H1 (cell line): ENCODE measurements at regions of chr12 and their contacts with region 1.

Region 1: GRCh38 chr12:49098035-49098451 is 3.4 kb upstream of the DHH start:
- DNase-seq: peak in 1 of 2 experiments; percentile 88
- H3K4me3 ChIP-seq: no peak overlapping the region
- H3K27ac ChIP-seq: no peak overlapping the region
- H3K4me1 ChIP-seq: peaks cover 0 to 11% (median 8%) of the 10 kb centered on the region in 4 experiments; a peak in 4 of 7 replicates
- H3K27me3 ChIP-seq: peaks cover 13 to 24% (median 23%) of the 10 kb centered on the region in 4 experiments
- CTCF ChIP-seq: peak; percentile 87 to 96 (median 91)
- EP300 ChIP-seq: no peak
- POLR2A ChIP-seq: no peak
- RAD21 ChIP-seq: peak; percentile 70 to 79

Region 2: GRCh38 chr12:49069507-49070346 is 28.3 kb before region 1 on chr12 and contains the start of gene RHEBL1:
- CTCF ChIA-PET with region 1: interaction called, 105 read pairs
- POLR2A ChIA-PET with region 1: interaction called, 7 read pairs
- DNase-seq: peak; percentile 86 to 98
- H3K4me3 ChIP-seq: peak within 1 kb of the TSS; percentile 70 to 93 (median 80)
- H3K27ac ChIP-seq: no peak within 1 kb of the TSS
- H3K4me1 ChIP-seq: peaks cover 2 to 6% (median 4%) of the 10 kb centered on the region in 4 experiments; a peak in 5 of 7 replicates
- H3K27me3 ChIP-seq: peaks cover 0 to 8% (median 3%) of the 10 kb centered on the region in 4 experiments; a peak in 5 of 7 replicates
- CTCF ChIP-seq: no peak
- EP300 ChIP-seq: no peak
- POLR2A ChIP-seq: no peak
- RAD21 ChIP-seq: no peak
- total RNA-seq, gene RHEBL1: 7.0 and 7.5 TPM in 2 replicates

Region 3: GRCh38 chr12:49110464-49111155 is 12.6 kb after region 1 on chr12 and contains the start of gene LMBR1L:
- CTCF ChIA-PET with region 1: interaction called, 178 read pairs
- POLR2A ChIA-PET with region 1: interaction called, 16 read pairs
- DNase-seq: peak; percentile 90 to 93
- H3K4me3 ChIP-seq: peak within 1 kb of the TSS; percentile 74 to 99 (median 92)
- H3K27ac ChIP-seq: peak within 1 kb of the TSS; percentile 55; the same call in 1 of the 2 replicates
- H3K4me1 ChIP-seq: peaks cover 0 to 10% (median 2%) of the 10 kb centered on the region in 4 experiments; a peak in 3 of 7 replicates
- H3K27me3 ChIP-seq: no peaks in the 10 kb centered on the region
- CTCF ChIP-seq: peak; percentile 9 to 43 (median 40); a peak in 2 of 4 replicates
- EP300 ChIP-seq: no peak
- POLR2A ChIP-seq: peak in 1 of 2 experiments; percentile 60; a peak in 1 of 3 replicates
- RAD21 ChIP-seq: peak in 1 of 2 experiments; percentile 5; a peak in 1 of 4 replicates
- total RNA-seq, gene LMBR1L: 47.7 and 49.6 TPM in 2 replicates

Region 4: DNA sequence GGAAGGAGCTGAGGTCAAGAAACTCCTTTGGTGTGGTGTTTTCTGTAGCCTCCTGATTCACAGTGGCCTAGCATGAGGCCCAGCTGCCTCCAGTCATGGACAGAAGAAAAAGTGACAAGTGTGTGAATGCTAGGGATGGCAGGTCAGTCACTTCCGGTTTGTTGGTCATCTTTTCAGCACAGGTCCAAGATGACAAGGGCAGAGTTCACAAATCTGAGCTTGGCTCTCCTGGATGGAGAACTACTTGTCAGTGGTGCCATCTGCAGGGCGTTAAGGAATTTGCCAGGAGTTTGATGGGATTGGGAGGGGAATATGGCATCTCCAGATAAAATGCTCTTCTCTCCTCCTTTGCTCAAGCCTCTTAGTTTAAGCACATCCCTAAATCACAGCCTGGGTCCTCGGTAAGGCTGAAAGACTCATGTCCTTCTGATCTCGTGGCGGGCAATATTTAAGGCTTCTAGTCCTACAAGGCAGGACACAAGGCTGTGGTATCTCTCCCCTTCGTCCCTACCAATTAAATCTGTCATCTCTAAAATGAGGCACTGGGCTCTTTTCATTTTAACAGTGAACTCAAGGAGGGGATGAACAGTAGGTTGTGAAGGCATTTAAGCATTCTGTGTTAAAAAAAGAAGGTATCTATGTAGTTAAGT is 23.1 kb after region 1 on chr12:
- CTCF ChIA-PET with region 1: interaction called, 35 read pairs
- POLR2A ChIA-PET with region 1: interaction called, 5 read pairs
- DNase-seq: peak; percentile 13 to 56
- H3K4me3 ChIP-seq: no peak overlapping the region
- H3K27ac ChIP-seq: no peak overlapping the region
- H3K4me1 ChIP-seq: no peaks in the 10 kb centered on the region
- H3K27me3 ChIP-seq: no peaks in the 10 kb centered on the region
- CTCF ChIP-seq: peak; percentile 48 to 82 (median 80)
- EP300 ChIP-seq: no peak
- POLR2A ChIP-seq: no peak
- RAD21 ChIP-seq: peak; percentile 75 to 80

Region 5: GRCh38 chr12:49200919-49201594 is 103.0 kb after region 1 on chr12:
- CTCF ChIA-PET with region 1: no interaction called
- POLR2A ChIA-PET with region 1: no interaction called
- DNase-seq: no peak
- H3K4me3 ChIP-seq: peak overlapping the region in 1 of 4 experiments; percentile 10; a peak in 1 of 8 replicates
- H3K27ac ChIP-seq: no peak overlapping the region
- H3K4me1 ChIP-seq: peaks cover 0 to 16% (median 4%) of the 10 kb centered on the region in 4 experiments; a peak in 3 of 7 replicates
- H3K27me3 ChIP-seq: peaks cover 0 to 2% (median 0%) of the 10 kb centered on the region in 4 experiments; a peak in 1 of 7 replicates
- CTCF ChIP-seq: no peak
- EP300 ChIP-seq: no peak
- POLR2A ChIP-seq: no peak
- RAD21 ChIP-seq: no peak